ENCODE measurements at regions of chr10 and their contacts with region 1.

Region 1: DNA sequence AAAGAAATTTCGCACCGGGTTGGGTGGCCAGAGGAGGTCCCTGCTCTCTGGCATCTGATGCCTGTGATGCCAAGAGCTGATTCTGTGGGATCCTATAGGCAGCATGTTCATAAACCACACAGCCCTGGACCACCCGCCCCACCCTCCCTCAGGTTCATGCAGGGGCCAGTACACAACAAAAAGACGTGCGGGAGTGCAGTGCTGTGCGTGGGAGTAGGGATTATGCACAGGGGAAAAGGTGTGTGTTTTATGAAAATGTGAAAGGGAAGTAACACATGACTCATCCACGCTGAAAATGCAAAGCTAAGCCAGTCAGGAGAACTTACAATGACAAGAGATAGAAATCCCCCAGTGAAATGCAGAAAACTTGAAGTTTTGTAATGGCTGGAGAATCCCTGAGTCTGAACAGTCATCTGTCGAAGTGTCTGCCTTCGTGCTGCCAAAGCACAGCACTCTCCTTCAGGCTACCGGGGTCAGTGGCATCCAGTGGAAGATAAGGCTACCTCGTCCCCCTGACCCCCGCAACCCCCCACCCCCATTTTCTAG is 1.1 kb downstream of the KIAA1217 start:
- DNase-seq: no peak
- ATAC-seq: peak; percentile 16

Region 2: DNA sequence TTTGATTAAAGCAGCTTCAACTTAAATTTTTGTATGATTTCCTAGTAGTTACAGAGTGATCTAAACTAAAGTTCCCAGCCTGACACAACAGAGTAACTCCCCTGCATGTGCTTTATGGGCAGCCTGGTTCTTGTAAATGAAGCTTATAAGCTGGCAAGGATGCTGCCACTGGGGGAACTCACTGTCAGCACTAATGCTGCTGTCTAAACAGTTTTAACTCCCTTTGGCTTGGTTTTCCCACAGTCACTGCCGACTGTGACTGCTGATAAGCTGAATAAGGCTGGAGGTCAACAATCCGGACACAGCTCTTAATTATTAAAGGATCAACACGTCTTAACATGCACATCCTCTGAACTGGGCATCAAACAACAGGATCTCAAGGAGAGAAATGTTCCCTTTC is 641.0 kb before region 1 on chr10:
- intact Hi-C with region 1: no loop called
- DNase-seq: no peak
- ATAC-seq: no peak

Region 3: GRCh38 chr10:24262931-24263590 is 53.0 kb after region 1 on chr10:
- intact Hi-C with region 1: loop called (anchors 2 kb)
- DNase-seq: no peak
- ATAC-seq: peak; percentile 88

Measured in sciatic nerve (tissue), 2 donors.